Activated CD4-positive, alpha-beta memory T cell treated with anti-CD3 and anti-CD28 coated beads for 36 hours (primary cell): ENCODE measurements at regions of chr11 and their contacts with region 1.

Region 1: DNA sequence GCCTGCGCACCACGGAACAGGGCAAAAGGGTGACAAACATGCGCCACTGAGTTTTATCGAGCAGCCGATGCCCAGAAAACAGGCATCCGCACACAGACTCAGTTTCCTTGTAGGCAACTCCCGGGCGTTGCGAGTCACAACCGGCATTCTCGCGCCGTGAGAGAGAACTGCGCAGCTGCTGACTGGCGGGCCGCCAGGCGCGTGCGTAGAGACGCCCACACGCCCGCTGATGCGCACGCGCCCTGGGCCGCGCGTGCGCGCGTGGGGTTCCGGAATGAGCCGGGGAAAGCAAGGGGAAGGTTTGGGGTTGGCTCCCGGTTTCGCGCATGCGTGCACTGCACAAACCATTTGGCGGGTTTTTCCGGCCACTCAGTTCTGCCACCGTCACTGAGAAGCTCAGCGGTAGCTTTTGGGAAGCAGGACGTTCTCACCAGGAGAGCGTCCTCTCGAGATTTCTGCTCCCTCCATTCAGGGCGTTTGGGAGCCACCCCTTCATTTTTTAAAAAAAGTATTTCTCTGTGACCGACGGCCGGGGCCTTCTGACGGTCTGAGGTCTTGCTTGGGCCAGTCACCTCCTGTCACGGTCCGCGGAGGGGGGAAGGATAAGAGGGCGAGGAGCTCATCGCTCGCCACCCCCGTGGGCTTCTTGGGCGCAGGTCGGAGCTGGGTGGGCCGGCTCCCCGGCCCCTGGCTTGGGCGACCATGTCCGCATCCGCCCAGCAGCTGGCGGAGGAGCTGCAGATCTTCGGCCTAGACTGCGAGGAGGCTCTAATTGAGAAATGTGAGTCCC is at the start of gene POLA2:
- DNase-seq: peak; percentile 98
- H3K4me3 Mint-ChIP-seq: peak within 1 kb of the TSS; percentile 94
- H3K27ac Mint-ChIP-seq: peak within 1 kb of the TSS; percentile 94
- H3K4me1 Mint-ChIP-seq: peaks cover 36% of the 10 kb centered on the region
- H3K27me3 Mint-ChIP-seq: no peaks in the 10 kb centered on the region
- total RNA-seq, gene POLA2: 62.9 to 66.9 TPM

Region 2: GRCh38 chr11:65180877-65181568 is 80.8 kb before region 1 on chr11:
- CTCF ChIA-PET with region 1: interaction called, 4 read pairs
- POLR2A ChIA-PET with region 1: interaction called, 7 read pairs
- intact Hi-C with region 1: loop called (anchors 1 kb)
- DNase-seq: peak; percentile 74
- H3K4me3 Mint-ChIP-seq: peak overlapping the region; percentile 87
- H3K27ac Mint-ChIP-seq: no peak overlapping the region
- H3K4me1 Mint-ChIP-seq: peaks cover 20% of the 10 kb centered on the region
- H3K27me3 Mint-ChIP-seq: no peaks in the 10 kb centered on the region

Region 3: GRCh38 chr11:65225279-65226102 is 36.3 kb before region 1 on chr11:
- CTCF ChIA-PET with region 1: interaction called, 10 read pairs
- POLR2A ChIA-PET with region 1: interaction called, 3 read pairs
- intact Hi-C with region 1: no loop called
- DNase-seq: peak; percentile 76
- H3K4me3 Mint-ChIP-seq: peak overlapping the region; percentile 72
- H3K27ac Mint-ChIP-seq: no peak overlapping the region
- H3K4me1 Mint-ChIP-seq: peaks cover 7% of the 10 kb centered on the region
- H3K27me3 Mint-ChIP-seq: peaks cover 24% of the 10 kb centered on the region

Region 4: DNA sequence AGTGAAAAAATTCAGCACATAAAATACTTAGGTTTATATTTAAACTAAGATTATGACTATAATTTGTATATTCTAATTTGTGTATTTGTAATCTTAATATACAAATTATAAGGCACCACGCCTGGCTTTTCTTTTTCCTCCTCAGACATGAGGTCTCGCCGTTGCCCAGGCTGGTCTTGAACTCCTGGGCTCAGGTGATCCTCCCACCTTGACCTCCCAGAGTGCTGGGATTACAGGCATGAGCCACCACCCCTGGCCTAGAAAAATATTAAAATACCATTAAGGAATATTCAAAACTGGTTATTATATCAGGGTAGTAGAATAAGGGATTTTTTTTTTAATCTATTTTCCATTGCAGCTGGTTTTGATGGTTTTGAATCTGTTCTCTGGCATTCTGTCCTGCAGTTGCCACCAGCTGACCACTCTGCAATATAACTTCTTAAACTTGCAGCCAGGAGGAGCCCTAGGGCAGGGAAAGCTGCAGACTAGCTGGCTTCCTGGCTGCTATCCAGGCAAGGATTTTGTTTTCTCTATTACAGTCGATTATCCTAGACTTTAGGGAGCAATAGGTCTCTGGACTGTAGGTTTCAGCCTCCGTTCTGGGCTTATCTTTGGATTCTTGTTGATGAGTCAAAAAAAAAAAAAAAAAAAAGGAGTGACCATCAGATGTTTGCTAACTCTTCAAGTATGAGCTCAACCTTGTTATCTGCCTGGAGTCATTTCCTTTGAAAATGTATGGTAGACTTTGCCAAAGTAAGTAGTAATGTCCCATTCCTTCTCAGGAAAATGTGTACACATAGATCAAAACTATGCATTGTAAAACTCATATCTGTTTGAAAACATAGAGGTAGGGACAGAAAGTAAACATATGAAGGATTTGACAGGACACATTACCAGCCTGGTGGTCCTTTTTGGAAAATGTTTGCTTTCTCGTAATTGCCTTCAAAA is 13.2 kb after region 1 on chr11:
- CTCF ChIA-PET with region 1: interaction called, 9 read pairs
- POLR2A ChIA-PET with region 1: interaction called, 11 read pairs
- intact Hi-C with region 1: no loop called
- DNase-seq: peak; percentile 45
- H3K4me3 Mint-ChIP-seq: no peak overlapping the region
- H3K27ac Mint-ChIP-seq: no peak overlapping the region
- H3K4me1 Mint-ChIP-seq: peaks cover 19% of the 10 kb centered on the region
- H3K27me3 Mint-ChIP-seq: no peaks in the 10 kb centered on the region

Region 5: GRCh38 chr11:65516135-65516935 is 254.5 kb after region 1 on chr11:
- CTCF ChIA-PET with region 1: no interaction called
- POLR2A ChIA-PET with region 1: no interaction called
- intact Hi-C with region 1: loop called (anchors 10 kb)
- DNase-seq: no peak
- H3K4me3 Mint-ChIP-seq: no peak overlapping the region
- H3K27ac Mint-ChIP-seq: peak overlapping the region; percentile 42
- H3K4me1 Mint-ChIP-seq: peaks cover 8% of the 10 kb centered on the region
- H3K27me3 Mint-ChIP-seq: no peaks in the 10 kb centered on the region

Region 6: GRCh38 chr11:65833297-65834030 is 571.7 kb after region 1 on chr11 and contains the start of gene SNX32:
- CTCF ChIA-PET with region 1: no interaction called
- POLR2A ChIA-PET with region 1: no interaction called
- intact Hi-C with region 1: no loop called
- DNase-seq: peak; percentile 98
- H3K4me3 Mint-ChIP-seq: no peak within 1 kb of the TSS
- H3K27ac Mint-ChIP-seq: no peak within 1 kb of the TSS
- H3K4me1 Mint-ChIP-seq: peaks cover 21% of the 10 kb centered on the region
- H3K27me3 Mint-ChIP-seq: no peaks in the 10 kb centered on the region
- total RNA-seq, gene SNX32: 2.0 to 2.7 TPM